Activated CD8-positive, alpha-beta T cell treated with anti-CD3 and anti-CD28 coated beads, Interleukin-2, amount 10 ng/mL, durations not matched to agents 7 days and 5 days (primary cell): ENCODE measurements at regions of chr11 and their contacts with region 1.

Region 1: DNA sequence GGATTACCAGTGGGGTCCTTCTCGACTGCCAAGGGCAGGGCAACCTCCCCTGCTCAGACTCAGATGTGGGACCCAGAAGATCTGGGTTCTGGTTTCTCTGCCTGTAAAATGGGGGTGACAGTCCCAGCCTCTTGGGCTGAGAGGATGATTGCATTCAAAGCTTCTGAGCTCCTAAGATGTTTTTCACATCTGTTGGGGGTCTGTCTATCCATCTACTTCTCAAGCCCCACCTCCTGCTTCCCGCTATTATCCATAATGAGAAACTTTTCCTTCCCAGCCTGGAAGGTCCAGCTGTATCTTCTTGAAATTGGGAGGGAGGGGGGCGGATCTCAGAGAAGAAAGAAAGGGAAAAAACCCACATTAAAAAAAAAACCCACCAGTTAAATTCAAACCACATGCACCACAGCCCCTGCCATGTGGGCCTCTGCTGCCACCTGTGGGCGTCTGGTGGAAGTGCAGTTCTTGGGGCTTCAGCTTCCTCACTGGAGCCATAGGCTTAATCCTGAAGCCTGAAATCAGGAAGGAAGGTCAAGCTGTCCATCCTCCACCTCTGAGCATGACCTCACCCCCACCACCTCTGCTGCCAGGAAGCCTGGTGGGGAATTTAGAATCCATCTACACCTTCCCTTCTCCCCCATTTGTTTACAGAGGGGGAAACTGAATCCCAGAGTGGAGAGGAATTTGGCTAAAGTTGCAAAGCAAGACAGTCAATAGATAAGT is 27.3 kb downstream of the ARHGEF17 start:
- DNase-seq: peak; percentile 82
- ATAC-seq: peak; percentile 63
- H3K4me3 Mint-ChIP-seq: no peak overlapping the region
- H3K27ac Mint-ChIP-seq: no peak overlapping the region
- H3K4me1 Mint-ChIP-seq: peaks cover 11% of the 10 kb centered on the region
- H3K27me3 Mint-ChIP-seq: peaks cover under 1% of the 10 kb centered on the region

Region 2: DNA sequence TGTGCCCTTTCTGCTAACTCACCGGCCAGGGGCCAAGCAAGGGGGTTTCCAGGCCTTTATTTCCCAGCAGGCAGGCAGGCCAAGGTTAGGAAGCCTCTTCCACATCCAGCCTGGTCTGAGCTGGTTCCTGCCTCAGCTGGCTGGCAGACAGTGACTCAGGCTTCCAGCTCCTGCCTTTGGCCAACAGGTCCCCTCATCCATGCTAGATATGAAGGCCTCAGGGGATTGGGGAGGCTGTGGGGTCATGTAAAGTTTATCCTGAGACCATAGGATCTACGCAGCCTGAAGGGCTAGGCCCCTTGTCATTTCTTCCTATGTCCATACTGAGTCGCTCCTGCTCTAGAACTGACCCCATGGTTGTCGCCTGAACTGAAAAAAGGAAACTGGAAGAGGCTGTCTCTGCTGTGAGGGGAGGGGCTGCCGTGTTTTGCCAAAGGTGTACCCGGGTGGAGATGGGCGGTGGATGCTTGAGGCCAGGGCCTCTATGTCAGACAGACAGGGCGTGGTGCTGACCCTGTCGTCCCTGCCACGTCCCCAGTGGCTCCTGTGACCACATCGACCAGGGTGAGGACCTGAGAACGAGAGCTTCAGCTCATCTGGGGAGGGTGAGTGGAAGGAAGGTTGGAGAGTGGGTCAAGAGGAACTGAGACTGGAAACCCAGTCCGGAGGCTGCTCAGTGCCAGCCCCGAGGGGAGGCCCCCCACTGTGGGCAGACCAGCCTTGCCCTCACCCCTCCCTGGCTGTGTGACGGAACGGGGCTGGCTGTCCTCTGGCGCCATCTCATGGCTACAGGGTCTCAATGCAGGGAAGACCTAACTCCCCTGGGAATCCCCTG is 46.3 kb before region 1 on chr11:
- CTCF ChIA-PET with region 1: interaction called, 31 read pairs
- POLR2A ChIA-PET with region 1: no interaction called
- DNase-seq: peak; percentile 59
- ATAC-seq: peak; percentile 66
- H3K4me3 Mint-ChIP-seq: no peak overlapping the region
- H3K27ac Mint-ChIP-seq: no peak overlapping the region
- H3K4me1 Mint-ChIP-seq: peaks cover 23% of the 10 kb centered on the region
- H3K27me3 Mint-ChIP-seq: peaks cover 10% of the 10 kb centered on the region

Region 3: DNA sequence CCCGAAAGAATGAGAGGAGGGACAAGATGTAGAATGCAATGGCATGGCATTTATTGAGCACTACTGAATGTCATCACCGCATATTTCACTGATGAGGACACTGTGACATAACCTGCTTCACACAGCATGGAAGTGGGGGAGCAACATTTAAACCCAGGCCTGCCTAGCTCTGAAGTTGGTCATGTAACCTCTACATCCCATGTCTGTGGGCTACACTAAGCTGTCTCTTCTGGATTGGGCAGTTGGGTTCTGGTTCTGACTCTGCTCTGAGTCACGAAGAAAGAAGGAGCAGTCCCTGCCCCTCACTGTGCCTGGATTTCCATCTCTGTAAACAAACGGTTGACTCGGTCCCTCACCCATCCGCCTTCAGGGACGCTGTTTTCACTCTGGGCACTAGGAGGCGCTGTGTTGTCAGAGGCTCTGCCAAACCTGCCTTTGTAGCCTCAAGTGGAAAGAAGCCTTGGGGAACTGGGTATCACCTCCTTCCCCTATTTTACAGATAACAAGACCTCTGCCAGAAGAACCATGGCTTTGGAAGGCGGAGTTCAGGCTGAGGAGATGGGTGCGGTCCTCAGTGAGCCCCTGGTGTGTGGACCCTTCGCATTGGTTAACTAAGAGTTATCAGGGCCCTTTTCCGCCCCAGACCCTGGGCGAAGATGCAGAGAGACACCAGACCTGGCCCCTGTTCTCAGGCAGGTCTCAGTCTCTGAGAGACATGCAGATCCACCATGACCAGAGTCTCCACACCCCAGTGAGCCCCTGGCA is 40.0 kb before region 1 on chr11:
- CTCF ChIA-PET with region 1: interaction called, 31 read pairs
- POLR2A ChIA-PET with region 1: no interaction called
- DNase-seq: peak; percentile 86
- ATAC-seq: peak; percentile 83
- H3K4me3 Mint-ChIP-seq: no peak overlapping the region
- H3K27ac Mint-ChIP-seq: no peak overlapping the region
- H3K4me1 Mint-ChIP-seq: no peaks in the 10 kb centered on the region
- H3K27me3 Mint-ChIP-seq: peaks cover 23% of the 10 kb centered on the region

Region 4: DNA sequence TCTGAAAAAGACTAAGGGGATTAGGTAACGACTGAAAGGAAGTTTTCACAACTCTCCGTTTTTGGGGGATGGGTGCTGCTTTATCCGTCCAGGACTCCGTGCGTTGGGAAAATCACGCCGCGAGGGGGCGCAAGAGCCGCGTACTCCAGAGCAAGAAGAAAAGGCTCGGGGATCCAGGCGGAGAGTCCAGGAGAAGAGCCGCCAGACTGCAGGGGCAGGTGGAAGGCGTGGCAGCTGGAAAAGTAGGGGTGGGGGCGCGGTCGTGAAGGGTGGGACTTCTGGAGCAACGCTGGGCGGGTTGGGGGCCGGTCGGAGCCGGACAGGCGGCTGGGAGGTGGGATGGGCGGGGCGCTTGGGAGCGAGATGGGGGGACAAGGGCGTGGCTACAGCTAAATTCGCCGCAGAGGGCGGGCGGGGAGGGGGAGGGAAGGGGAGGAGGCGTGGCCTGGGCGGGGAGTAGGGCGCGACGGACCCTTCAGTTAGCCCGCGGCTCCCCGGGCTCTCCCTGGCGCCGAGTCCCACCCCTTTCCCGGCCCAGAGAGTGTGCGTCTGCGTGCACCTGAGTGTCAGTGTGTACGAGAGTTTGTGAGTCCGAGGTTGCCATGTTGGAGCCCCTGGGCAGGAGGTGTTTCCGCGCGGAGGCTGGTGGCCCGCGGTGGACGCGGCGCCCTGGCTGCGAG is 27.9 kb before region 1 on chr11:
- CTCF ChIA-PET with region 1: interaction called, 93 read pairs
- POLR2A ChIA-PET with region 1: no interaction called
- DNase-seq: peak; percentile 94
- ATAC-seq: peak; percentile 77
- H3K4me3 Mint-ChIP-seq: peak overlapping the region; percentile 84
- H3K27ac Mint-ChIP-seq: peak overlapping the region; percentile 41
- H3K4me1 Mint-ChIP-seq: peaks cover 10% of the 10 kb centered on the region
- H3K27me3 Mint-ChIP-seq: peaks cover 28% of the 10 kb centered on the region

Region 5: GRCh38 chr11:73314117-73314961 is 21.0 kb before region 1 on chr11:
- CTCF ChIA-PET with region 1: interaction called, 93 read pairs
- POLR2A ChIA-PET with region 1: no interaction called
- DNase-seq: no peak
- ATAC-seq: no peak
- H3K4me3 Mint-ChIP-seq: no peak overlapping the region
- H3K27ac Mint-ChIP-seq: peak overlapping the region; percentile 74
- H3K4me1 Mint-ChIP-seq: peaks cover 19% of the 10 kb centered on the region
- H3K27me3 Mint-ChIP-seq: peaks cover 11% of the 10 kb centered on the region

Region 6: GRCh38 chr11:73325036-73325981 is 10.1 kb before region 1 on chr11:
- CTCF ChIA-PET with region 1: interaction called, 23 read pairs
- POLR2A ChIA-PET with region 1: no interaction called
- DNase-seq: no peak
- ATAC-seq: no peak
- H3K4me3 Mint-ChIP-seq: no peak overlapping the region
- H3K27ac Mint-ChIP-seq: no peak overlapping the region
- H3K4me1 Mint-ChIP-seq: peaks cover 23% of the 10 kb centered on the region
- H3K27me3 Mint-ChIP-seq: peaks cover 2% of the 10 kb centered on the region

Region 7: GRCh38 chr11:73360336-73361013 is 25.1 kb after region 1 on chr11:
- CTCF ChIA-PET with region 1: interaction called, 11 read pairs
- POLR2A ChIA-PET with region 1: interaction called, 4 read pairs
- DNase-seq: peak; percentile 49
- ATAC-seq: peak; percentile 37
- H3K4me3 Mint-ChIP-seq: no peak overlapping the region
- H3K27ac Mint-ChIP-seq: no peak overlapping the region
- H3K4me1 Mint-ChIP-seq: peaks cover 10% of the 10 kb centered on the region
- H3K27me3 Mint-ChIP-seq: no peaks in the 10 kb centered on the region